ENCODE measurements at regions of chr3 and their contacts with region 1.

Region 1: DNA sequence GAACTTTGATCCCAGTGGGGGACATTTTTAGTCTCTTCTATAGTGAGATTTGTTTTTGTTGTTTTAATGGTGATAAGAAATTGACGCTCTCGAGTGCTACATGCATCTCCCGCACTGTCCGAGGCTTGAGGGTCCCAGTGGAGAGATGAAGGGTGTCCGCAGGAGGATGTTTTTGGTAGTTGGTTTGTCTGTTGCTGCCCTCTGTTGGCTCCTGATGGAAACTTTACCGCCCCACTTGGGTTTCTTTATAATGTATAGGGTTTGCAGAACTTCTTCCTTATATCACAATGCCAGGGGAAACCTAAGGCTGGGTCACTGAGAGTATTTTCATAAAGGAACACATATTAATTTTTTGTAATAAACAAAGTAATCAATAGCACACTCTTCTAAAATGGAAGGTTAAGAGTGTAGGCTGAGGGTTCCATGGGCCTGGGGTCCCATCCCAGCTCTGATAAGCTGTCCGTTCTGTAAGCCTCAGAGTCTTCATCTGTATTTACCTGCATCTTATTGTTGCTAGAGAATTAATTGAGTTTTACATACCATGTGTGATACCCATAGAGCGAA is 185.3 kb upstream of the FEZF2 start:
- DNase-seq: no peak
- H3K4me3 ChIP-seq: no peak overlapping the region
- H3K27ac ChIP-seq: no peak overlapping the region
- H3K4me1 ChIP-seq: no peaks in the 10 kb centered on the region
- H3K27me3 ChIP-seq: no peaks in the 10 kb centered on the region
- CTCF ChIP-seq: peak; percentile 20

Region 2: DNA sequence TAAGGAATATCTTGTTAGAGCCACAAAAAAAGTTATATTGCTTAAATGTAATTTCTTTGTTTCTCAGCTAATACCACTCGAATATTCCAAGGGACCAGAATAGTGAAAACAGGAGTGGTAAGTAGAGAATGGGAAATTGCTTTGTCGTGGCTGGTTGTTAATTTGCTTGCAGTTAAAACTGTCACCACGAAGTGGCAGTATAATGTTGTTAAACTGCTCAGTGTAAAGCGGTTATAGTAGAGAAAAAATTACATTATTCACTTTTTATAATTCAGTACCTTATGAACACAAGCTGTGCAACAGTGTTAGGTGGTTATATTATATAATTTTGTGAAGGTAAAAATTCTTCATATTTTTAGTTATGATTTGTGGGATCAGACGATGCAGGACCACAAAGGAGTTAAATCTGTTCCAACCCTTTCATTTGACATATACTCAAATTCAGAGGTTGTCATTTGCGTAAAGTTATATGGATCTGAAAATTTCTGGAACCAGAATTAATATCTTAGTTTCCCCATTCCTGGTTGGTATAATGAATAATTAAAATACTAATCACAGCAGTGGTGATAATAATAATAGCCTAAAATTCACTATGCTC is 357.1 kb before region 1 on chr3:
- intact Hi-C with region 1: loop called (anchors 5 kb)
- DNase-seq: no peak
- H3K4me3 ChIP-seq: no peak overlapping the region
- H3K27ac ChIP-seq: no peak overlapping the region
- H3K4me1 ChIP-seq: no peaks in the 10 kb centered on the region
- H3K27me3 ChIP-seq: no peaks in the 10 kb centered on the region
- CTCF ChIP-seq: peak; percentile 58

Region 3: GRCh38 chr3:62332835-62333244 is 225.8 kb before region 1 on chr3:
- intact Hi-C with region 1: loop called (anchors 5 kb)
- DNase-seq: no peak
- H3K4me3 ChIP-seq: no peak overlapping the region
- H3K27ac ChIP-seq: no peak overlapping the region
- H3K4me1 ChIP-seq: no peaks in the 10 kb centered on the region
- H3K27me3 ChIP-seq: no peaks in the 10 kb centered on the region
- CTCF ChIP-seq: no peak

Measured in colonic mucosa (tissue), 4 donors.